GM18951 (cell line): ENCODE measurements at regions of chr6 and their contacts with region 1.

Region 1: DNA sequence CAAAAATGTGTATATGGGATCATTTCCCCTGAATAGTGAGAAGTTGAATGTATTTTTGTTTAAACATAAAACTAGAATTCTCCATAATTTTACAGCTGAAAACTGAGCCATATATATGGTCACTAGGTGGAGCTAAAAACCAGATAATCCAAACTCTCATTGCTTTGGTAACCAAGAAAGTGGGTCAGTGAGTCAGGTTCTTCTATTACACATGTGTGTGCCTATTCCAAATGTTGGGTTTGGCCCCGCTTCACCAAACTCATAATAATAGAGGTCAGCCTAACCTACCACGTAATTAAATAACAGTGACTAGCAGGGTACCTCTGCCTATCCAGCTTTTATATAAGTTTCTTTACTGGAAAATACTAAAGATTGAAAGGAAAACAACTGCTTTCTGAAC is 19.3 kb upstream of the RNGTT start:
- POLR2A ChIP-seq: no peak

Region 2: GRCh38 chr6:88388589-88388988 is 594.1 kb before region 1 on chr6:
- in situ Hi-C with region 1: no loop called
- POLR2A ChIP-seq: no peak

Region 3: GRCh38 chr6:89375427-89376267 is 392.9 kb after region 1 on chr6:
- in situ Hi-C with region 1: loop called (anchors 25 kb)
- POLR2A ChIP-seq: no peak